Thyroid gland (tissue), 4 donors: ENCODE measurements at regions of chr10 and their contacts with region 1.

Region 1: DNA sequence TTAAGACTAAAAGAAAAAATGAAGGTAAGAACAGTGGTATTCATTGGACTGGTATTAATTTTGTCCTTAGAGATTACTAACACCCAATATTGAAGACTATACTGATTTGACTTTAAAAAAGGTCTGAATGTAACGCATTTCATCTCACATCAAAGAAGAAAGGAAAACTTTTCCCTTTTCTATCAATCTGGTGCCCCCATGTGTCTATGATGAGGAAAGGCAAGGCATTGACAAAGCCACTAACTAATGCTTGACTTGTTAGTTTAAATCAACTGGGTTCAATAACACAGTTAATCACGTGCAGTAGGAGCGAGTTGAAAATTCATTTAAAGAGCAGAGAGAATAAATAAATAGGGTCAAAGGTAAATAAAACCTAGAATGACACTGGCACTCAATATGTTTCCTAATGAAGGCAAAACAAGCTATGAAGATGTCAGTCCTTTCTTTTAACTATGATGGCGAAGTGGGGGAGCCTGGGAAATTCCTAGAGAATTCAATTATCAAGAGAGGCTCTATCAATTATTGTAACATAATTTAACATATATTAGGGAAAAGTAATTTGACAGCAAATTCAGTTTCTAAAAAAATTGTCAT is 180.9 kb downstream of the ANK3 start:
- DNase-seq: no peak
- H3K4me3 ChIP-seq: no peak overlapping the region
- H3K27ac ChIP-seq: no peak overlapping the region
- H3K4me1 ChIP-seq: no peaks in the 10 kb centered on the region
- H3K27me3 ChIP-seq: no peaks in the 10 kb centered on the region
- CTCF ChIP-seq: peak; percentile 15 to 84 (median 63)
- POLR2A ChIP-seq: no peak

Region 2: GRCh38 chr10:60099998-60100747 is 108.6 kb before region 1 on chr10:
- intact Hi-C with region 1: loop called (anchors 5 kb)
- DNase-seq: no peak
- H3K4me3 ChIP-seq: no peak overlapping the region
- H3K27ac ChIP-seq: peak overlapping the region in 1 of 3 donors; percentile 40
- H3K4me1 ChIP-seq: peaks cover 0 to under 1% of the 10 kb centered on the region in 2 donors
- H3K27me3 ChIP-seq: no peaks in the 10 kb centered on the region
- CTCF ChIP-seq: peak in 5 of 6 experiments; percentile 25 to 72 (median 58)
- POLR2A ChIP-seq: no peak

Region 3: GRCh38 chr10:60434418-60435046 is 225.8 kb after region 1 on chr10:
- intact Hi-C with region 1: loop called (anchors 10 kb)
- DNase-seq: peak; percentile 44 to 49
- H3K4me3 ChIP-seq: no peak overlapping the region
- H3K27ac ChIP-seq: no peak overlapping the region
- H3K4me1 ChIP-seq: peaks cover 9 to 10% of the 10 kb centered on the region in 2 donors
- H3K27me3 ChIP-seq: no peaks in the 10 kb centered on the region
- CTCF ChIP-seq: peak; percentile 39 to 89 (median 66)
- POLR2A ChIP-seq: no peak